ENCODE measurements at regions of chr2 and their contacts with region 1.

Region 1: GRCh38 chr2:60581433-60582282 is 28.2 kb upstream of the BCL11A start:
- DNase-seq: peak; percentile 70 to 76
- ATAC-seq: peak; percentile 93 to 98 (median 98)
- H3K4me3 ChIP-seq: no peak overlapping the region
- H3K4me3 Mint-ChIP-seq: no peak overlapping the region
- H3K27ac ChIP-seq: no peak overlapping the region
- H3K27ac Mint-ChIP-seq: no peak overlapping the region
- H3K4me1 ChIP-seq: peaks cover 5% of the 10 kb centered on the region
- H3K4me1 Mint-ChIP-seq: peaks cover 0 to 4% of the 10 kb centered on the region in 2 donors
- H3K27me3 ChIP-seq: peaks cover 9% of the 10 kb centered on the region
- H3K27me3 Mint-ChIP-seq: peaks cover 34 to 36% of the 10 kb centered on the region in 2 donors
- CTCF ChIP-seq: peak; percentile 90

Region 2: DNA sequence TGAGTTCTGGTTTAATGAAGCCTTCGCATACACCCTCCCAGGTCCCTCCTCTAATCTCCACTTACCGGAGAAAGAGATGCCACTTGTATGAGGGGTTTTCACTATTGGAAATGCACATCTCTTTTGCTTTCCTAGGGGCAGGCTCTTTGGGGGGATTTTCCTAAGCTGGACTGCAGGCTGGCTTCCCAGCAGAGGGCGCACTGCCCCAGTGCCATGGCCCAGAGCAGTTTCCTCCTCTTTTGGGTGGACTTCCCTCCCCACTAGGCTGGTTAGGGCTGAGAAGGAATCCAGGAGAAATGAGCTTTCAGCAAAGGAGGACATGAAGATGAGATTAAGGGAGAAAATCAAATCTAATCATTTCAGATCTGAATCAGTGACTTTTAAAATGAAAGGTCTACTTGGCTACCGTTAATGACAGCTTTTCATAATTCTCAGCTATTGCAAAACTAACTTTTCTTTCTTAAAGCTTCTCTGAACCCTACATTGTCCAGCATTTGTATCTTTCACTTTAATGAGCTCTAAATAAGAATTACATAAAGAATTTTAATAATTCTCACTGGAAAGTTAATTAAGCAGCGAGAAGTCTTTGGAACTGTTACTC is 1556.4 kb before region 1 on chr2:
- intact Hi-C with region 1: loop called (anchors 5 kb)
- DNase-seq: peak in 1 of 2 donors; percentile 46
- ATAC-seq: peak in 1 of 3 donors; percentile 43
- H3K4me3 ChIP-seq: no peak overlapping the region
- H3K4me3 Mint-ChIP-seq: no peak overlapping the region
- H3K27ac ChIP-seq: no peak overlapping the region
- H3K27ac Mint-ChIP-seq: no peak overlapping the region
- H3K4me1 ChIP-seq: no peaks in the 10 kb centered on the region
- H3K4me1 Mint-ChIP-seq: no peaks in the 10 kb centered on the region
- H3K27me3 ChIP-seq: no peaks in the 10 kb centered on the region
- H3K27me3 Mint-ChIP-seq: peaks cover 0 to 4% of the 10 kb centered on the region in 2 donors
- CTCF ChIP-seq: peak; percentile 46

Region 3: GRCh38 chr2:59301466-59302402 is 1279.9 kb before region 1 on chr2:
- intact Hi-C with region 1: loop called (anchors 10 kb)
- DNase-seq: peak in 1 of 2 donors; percentile 60
- ATAC-seq: peak in 1 of 3 donors; percentile 34
- H3K4me3 ChIP-seq: no peak overlapping the region
- H3K4me3 Mint-ChIP-seq: no peak overlapping the region
- H3K27ac ChIP-seq: no peak overlapping the region
- H3K27ac Mint-ChIP-seq: no peak overlapping the region
- H3K4me1 ChIP-seq: no peaks in the 10 kb centered on the region
- H3K4me1 Mint-ChIP-seq: no peaks in the 10 kb centered on the region
- H3K27me3 ChIP-seq: no peaks in the 10 kb centered on the region
- H3K27me3 Mint-ChIP-seq: no peaks in the 10 kb centered on the region
- CTCF ChIP-seq: no peak

Region 4: DNA sequence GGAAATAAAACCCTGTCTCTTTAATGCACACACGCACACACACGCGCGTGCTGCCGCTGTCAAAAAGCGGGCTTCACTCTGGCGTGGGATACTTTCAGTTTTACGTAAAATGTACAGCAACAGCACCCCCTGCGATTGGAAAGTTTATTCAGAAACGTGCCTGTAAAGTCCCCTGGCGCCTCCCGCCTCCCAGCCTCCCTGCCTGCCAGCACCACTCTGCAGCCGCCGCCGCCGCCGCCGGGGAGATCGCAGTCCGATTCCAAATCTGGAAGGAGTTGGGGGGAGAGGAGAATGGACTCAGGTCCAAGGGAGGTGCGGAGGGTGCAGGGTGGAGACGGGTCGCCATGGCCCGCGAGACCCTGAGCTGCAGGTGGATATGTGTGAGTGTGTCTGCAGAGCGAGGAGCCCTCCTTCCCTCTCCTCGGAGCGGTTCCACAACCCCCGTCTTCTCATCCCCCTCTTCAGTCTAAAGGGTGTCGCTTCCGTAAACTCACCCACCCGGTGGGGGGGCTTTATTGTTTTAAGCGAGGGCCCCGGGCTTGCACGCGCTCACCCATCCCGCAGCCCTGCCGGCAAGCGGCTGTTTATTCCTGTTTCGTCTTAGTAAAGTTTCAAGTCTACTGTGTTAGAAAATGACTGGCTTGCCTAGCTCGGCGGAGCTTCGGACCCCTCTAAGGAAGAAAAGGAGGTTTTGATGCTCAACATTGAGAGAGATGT is 26.4 kb before region 1 on chr2:
- intact Hi-C with region 1: no loop called
- DNase-seq: peak; percentile 49 to 81
- ATAC-seq: peak; percentile 66 to 70 (median 68)
- H3K4me3 ChIP-seq: peak overlapping the region; percentile 85
- H3K4me3 Mint-ChIP-seq: peak overlapping the region; percentile 94
- H3K27ac ChIP-seq: peak overlapping the region; percentile 73
- H3K27ac Mint-ChIP-seq: peak overlapping the region; percentile 24 to 79
- H3K4me1 ChIP-seq: peaks cover 61% of the 10 kb centered on the region
- H3K4me1 Mint-ChIP-seq: peaks cover 25 to 51% of the 10 kb centered on the region in 2 donors
- H3K27me3 ChIP-seq: peaks cover 63% of the 10 kb centered on the region
- H3K27me3 Mint-ChIP-seq: peaks cover 44 to 50% of the 10 kb centered on the region in 2 donors
- CTCF ChIP-seq: peak; percentile 25

Measured in natural killer cell (primary cell).